ENCODE measurements at regions of chr5 and their contacts with region 1.

Region 1: GRCh38 chr5:150217873-150218692 is 28.2 kb downstream of the SLC6A7 start:
- DNase-seq: peak; percentile 88 to 92
- ATAC-seq: peak; percentile 85
- H3K4me3 ChIP-seq: no peak overlapping the region
- H3K27ac ChIP-seq: no peak overlapping the region
- H3K4me1 ChIP-seq: no peaks in the 10 kb centered on the region
- H3K27me3 ChIP-seq: no peaks in the 10 kb centered on the region

Region 2: DNA sequence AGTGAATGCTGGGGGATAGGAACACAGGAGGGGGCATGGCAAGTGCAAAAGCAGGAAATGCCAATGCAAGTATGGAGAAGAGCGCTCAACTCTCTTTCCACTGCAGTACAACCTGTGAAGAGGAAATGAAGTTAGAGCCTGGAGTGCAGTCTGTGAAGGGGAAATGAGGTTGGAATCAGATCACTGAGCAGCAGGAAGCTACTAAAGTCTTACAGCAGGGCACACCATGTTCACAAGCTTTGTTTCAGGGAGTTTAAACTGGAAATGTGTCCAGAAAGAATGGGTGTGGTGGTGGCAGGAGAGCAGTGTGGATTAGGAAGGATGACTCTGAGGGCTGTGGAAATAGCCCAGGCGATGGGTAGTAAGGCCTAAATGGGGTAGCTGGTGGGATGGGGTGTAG is 621.4 kb before region 1 on chr5:
- intact Hi-C with region 1: no loop called
- DNase-seq: no peak
- ATAC-seq: peak; percentile 37
- H3K4me3 ChIP-seq: no peak overlapping the region
- H3K27ac ChIP-seq: no peak overlapping the region
- H3K4me1 ChIP-seq: peaks cover 3 to 5% of the 10 kb centered on the region in 2 donors
- H3K27me3 ChIP-seq: no peaks in the 10 kb centered on the region

Region 3: GRCh38 chr5:150161242-150162141 is 56.6 kb before region 1 on chr5:
- intact Hi-C with region 1: loop called (anchors 1 to 2 kb)
- DNase-seq: peak; percentile 91 to 97
- ATAC-seq: peak; percentile 84
- H3K4me3 ChIP-seq: no peak overlapping the region
- H3K27ac ChIP-seq: peak overlapping the region in 1 of 2 donors; percentile 26
- H3K4me1 ChIP-seq: peaks cover 0 to 2% of the 10 kb centered on the region in 2 donors
- H3K27me3 ChIP-seq: no peaks in the 10 kb centered on the region

Region 4: DNA sequence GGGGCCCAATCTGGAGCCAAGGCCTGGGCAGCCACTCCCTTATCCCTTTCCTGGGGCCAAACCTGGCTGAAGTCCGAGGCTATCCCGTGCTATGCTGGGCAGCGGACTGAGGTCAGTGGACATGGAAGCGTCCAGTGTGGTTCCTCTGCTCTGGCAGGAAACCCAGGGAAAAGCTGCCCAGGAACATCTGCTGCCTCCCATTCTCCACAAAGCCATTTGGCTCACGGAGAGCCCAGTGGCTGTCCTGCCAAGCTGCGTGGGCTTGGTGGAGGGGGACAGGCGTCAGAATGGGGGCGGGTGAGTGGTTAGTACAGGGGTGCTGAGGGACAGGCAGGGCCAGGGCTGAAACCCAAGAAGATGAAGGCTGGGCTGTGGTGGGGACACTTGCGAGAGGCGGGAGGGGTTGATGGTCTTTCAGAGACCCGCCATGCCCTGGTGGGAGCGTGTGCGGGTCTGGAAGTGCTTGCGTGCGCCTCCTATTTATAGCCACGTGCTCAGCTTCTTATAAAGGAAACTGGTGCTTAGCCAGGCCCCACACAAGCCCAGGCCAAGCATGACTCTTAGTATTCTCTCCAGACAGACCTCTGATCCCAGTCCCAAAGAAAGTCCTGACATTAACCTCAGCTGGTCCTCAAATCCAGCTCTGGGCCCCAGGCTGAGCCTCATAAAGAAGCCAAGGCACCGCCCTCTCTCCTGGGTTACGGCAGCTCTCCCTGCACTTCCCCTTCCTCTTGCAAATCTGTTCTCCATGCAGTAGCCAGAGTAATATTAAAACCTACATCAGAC is 37.6 kb before region 1 on chr5:
- intact Hi-C with region 1: loop called in 1 of 2 experiments (anchors 5 kb)
- DNase-seq: peak; percentile 91 to 93
- ATAC-seq: peak; percentile 90
- H3K4me3 ChIP-seq: no peak overlapping the region
- H3K27ac ChIP-seq: peak overlapping the region; percentile 88 to 98
- H3K4me1 ChIP-seq: no peaks in the 10 kb centered on the region
- H3K27me3 ChIP-seq: no peaks in the 10 kb centered on the region

Measured in aorta (tissue), 5 donors.